BJ (cell line): ENCODE measurements at regions of chr6 and their contacts with region 1.

Region 1: GRCh38 chr6:85678602-85679444 is 36.1 kb upstream of the SYNCRIP start:
- DNase-seq: peak; percentile 97
- H3K4me3 ChIP-seq: peak overlapping the region; percentile 97
- H3K27me3 ChIP-seq: no peaks in the 10 kb centered on the region
- CTCF ChIP-seq: no peak

Region 2: DNA sequence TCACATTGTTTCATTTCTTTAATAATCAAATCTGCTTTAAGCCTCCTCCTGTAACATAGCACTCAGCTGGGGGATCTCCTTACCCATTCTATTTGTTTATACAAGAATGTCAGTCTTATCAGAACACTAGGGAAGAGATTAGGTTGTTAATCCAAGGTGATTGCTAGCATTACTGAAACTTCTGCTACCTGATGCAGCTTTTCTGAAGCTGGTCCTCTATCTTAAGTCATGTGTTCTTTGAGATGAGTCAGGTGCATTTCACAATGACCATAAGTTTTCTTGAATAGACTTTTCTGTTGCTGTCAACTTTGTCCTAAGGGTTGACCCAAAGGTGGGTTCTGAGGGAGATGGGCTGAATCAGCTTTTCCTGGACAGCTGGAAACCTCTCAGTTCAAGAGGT is 24.6 kb after region 1 on chr6:
- CTCF ChIA-PET with region 1: no interaction called
- POLR2A ChIA-PET with region 1: no interaction called
- DNase-seq: no peak
- H3K4me3 ChIP-seq: no peak overlapping the region
- H3K27me3 ChIP-seq: no peaks in the 10 kb centered on the region
- CTCF ChIP-seq: no peak

Region 3: DNA sequence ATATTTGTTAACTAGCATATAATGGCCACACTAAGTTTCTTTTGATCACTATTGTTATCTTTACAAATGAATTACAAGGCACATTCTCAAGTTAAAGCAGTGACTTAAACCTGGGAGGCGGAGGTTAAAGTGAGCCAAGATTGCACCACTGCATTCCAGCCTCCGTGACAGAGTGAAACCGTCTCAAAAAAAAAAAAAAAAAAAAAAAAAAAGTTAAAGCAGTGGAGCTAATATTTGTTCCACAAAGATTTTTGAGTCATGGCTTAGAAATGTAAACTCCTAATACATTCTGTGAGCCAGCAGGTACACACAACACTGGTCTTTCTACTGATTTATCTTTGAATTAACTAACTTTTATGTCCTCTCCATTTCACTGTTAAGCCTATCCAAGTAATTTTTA is 1036.9 kb after region 1 on chr6:
- CTCF ChIA-PET with region 1: no interaction called
- POLR2A ChIA-PET with region 1: interaction called, 12 read pairs
- DNase-seq: no peak
- H3K4me3 ChIP-seq: no peak overlapping the region
- H3K27me3 ChIP-seq: no peaks in the 10 kb centered on the region
- CTCF ChIP-seq: no peak